Dendritic cell treated with granulocyte-macrophage colony-stimulating factor and Interleukin-4, amounts not matched to agents 40 ng/mL and 50 ng/mL, for 4 days (primary cell): ENCODE measurements at regions of chrX and their contacts with region 1.

Region 1: DNA sequence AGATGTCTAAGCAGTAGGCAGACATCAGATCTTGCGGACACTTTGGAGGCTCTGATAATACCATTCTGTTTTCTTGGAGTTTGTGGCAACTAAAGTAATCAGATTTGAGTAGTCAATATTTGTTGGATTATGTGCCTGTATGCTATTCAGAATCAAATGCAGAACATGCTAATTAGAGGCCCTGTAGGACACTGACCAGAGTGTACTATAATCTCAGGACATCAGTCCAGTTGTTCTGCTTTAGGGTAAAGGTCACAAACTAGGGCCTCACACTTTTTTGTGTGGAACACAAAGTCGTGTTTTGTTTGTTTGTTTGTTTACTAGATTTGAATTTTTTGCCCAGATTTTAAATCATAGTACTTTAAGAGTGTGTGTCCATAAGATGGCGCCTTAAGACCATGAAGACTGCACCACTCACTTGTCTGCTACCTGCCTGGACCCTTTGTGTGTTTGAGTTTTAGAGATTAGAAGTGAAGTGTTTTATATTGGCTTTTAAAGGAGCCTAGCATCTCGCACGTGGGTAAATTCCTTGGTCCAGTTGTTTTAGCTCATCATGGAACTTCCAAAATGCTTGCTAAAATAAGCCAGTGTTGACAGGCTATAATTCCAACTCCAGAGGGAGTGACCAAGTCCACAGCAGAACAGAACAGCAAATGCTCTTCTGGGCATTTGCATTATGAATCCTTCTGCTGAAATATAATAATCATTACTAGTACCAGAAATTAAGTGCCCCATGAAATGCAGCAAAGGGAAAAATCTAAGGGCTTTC is 34.7 kb downstream of the IL13RA1 start:
- H3K4me3 Mint-ChIP-seq: no peak overlapping the region
- H3K27ac Mint-ChIP-seq: no peak overlapping the region
- H3K4me1 Mint-ChIP-seq: peaks cover 9% of the 10 kb centered on the region
- H3K27me3 Mint-ChIP-seq: no peaks in the 10 kb centered on the region

Region 2: DNA sequence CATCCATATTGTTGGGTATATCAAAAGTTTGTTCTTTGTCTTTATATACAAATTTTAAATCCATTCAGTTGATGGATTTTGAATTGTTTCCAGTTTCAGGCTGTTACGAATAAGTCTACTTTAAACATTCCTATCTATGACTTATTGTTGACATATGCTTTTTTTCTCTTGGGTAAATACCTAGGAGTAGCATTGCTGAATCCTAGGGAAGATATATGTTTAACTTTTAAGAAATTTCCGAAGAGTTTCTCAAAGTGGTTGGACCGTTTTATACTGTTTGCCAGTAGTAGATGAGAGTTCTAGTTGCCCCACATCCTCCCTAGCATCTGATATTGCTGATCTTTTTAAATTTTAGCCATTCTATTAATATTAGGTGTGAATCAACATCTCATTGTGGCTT is 95.6 kb before region 1 on chrX:
- intact Hi-C with region 1: loop called (anchors 5 kb)
- H3K4me3 Mint-ChIP-seq: no peak overlapping the region
- H3K27ac Mint-ChIP-seq: no peak overlapping the region
- H3K4me1 Mint-ChIP-seq: no peaks in the 10 kb centered on the region
- H3K27me3 Mint-ChIP-seq: no peaks in the 10 kb centered on the region

Region 3: GRCh38 chrX:118682258-118683014 is 79.7 kb before region 1 on chrX:
- intact Hi-C with region 1: no loop called
- H3K4me3 Mint-ChIP-seq: no peak overlapping the region
- H3K27ac Mint-ChIP-seq: no peak overlapping the region
- H3K4me1 Mint-ChIP-seq: peaks cover 5% of the 10 kb centered on the region
- H3K27me3 Mint-ChIP-seq: no peaks in the 10 kb centered on the region

Region 4: DNA sequence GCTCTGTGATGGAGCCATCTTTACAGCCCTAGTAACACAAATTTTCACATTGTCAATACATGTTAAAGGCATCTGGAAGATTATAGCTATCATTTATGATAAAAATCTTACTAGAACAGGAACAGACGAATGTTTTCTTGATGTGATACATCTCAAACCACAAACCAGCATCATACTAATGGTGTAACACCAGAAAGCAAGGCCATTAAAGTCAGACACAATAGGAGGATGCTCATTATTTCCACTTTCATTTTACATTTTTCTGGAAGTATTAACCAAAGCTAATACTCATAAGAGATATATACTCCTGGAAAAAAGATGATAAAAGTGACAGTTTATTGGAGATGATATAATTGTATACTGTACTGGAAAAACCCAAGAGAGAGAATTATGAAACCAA is 1138.9 kb after region 1 on chrX:
- intact Hi-C with region 1: no loop called
- H3K4me3 Mint-ChIP-seq: no peak overlapping the region
- H3K27ac Mint-ChIP-seq: no peak overlapping the region
- H3K4me1 Mint-ChIP-seq: peaks cover 20% of the 10 kb centered on the region
- H3K27me3 Mint-ChIP-seq: peaks cover 2% of the 10 kb centered on the region